PC-3 (cell line): ENCODE measurements at regions of chr10 and their contacts with region 1.

Region 1: DNA sequence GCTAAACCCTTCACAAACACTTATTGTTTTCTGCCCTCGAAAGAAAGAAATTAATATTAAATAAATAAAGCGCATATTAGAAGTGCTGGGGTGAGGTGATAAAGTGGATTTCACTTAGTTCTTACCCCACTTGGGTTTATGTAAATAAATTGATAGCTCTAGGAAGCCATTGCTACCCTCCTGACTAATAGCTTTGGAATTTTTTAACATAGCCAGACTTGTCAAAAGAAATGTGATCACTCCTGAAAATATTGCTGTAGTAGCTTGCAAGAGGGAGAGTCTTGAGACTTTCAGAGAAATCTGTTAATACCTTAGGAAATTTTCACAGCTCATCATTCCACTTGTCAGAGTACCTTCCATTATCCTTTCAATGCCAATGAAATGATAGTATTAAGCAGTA is 7.6 kb downstream of the ARL5B start:
- DNase-seq: peak; percentile 76
- ATAC-seq: peak; percentile 71
- H3K4me3 ChIP-seq: peak overlapping the region; percentile 48
- H3K27ac ChIP-seq: peak overlapping the region; percentile 52
- H3K4me1 ChIP-seq: peaks cover 26% of the 10 kb centered on the region
- H3K27me3 ChIP-seq: no peaks in the 10 kb centered on the region
- CTCF ChIP-seq: no peak

Region 2: GRCh38 chr10:18238870-18239485 is 427.8 kb before region 1 on chr10:
- CTCF ChIA-PET with region 1: no interaction called
- POLR2A ChIA-PET with region 1: no interaction called
- intact Hi-C with region 1: no loop called
- DNase-seq: peak; percentile 46
- ATAC-seq: no peak
- H3K4me3 ChIP-seq: no peak overlapping the region
- H3K27ac ChIP-seq: no peak overlapping the region
- H3K4me1 ChIP-seq: no peaks in the 10 kb centered on the region
- H3K27me3 ChIP-seq: no peaks in the 10 kb centered on the region
- CTCF ChIP-seq: peak; percentile 52

Region 3: DNA sequence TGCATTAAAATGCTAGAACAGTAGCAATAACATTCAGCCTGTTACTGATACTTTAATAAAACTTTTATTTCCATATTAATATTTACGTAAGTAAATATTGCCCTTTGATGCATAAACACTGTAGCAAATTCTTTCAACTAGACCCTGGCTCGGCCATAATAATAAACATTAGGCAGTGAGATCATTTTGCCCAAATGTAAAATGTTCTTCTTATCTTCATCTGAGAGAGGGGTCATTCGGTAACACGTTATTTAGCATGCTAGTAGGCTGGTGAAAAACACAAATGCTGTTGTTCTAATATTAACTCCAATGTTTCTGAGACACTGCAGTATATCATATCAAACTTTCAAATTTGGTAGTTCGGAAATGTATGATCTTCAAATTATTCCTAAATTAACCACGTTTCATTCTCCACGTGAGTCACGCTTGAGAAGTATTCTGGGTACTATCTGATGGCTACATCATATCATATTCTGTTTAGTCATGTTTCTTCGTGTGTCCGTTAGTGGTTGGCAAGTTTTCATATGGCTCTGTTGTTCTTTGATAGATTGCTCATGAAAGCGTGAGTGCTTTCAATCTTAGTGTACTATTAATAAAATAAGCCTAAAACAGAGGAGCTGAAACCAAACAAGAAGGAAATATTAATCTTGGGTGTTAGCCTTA is 161.2 kb before region 1 on chr10:
- CTCF ChIA-PET with region 1: no interaction called
- POLR2A ChIA-PET with region 1: no interaction called
- intact Hi-C with region 1: no loop called
- DNase-seq: peak; percentile 22
- ATAC-seq: no peak; the same call in 1 of the 2 replicates
- H3K4me3 ChIP-seq: no peak overlapping the region
- H3K27ac ChIP-seq: no peak overlapping the region
- H3K4me1 ChIP-seq: 0 out of 2 replicates have a peak, but pooled peaks cover 8% of the 10 kb centered on the region
- H3K27me3 ChIP-seq: no peaks in the 10 kb centered on the region
- CTCF ChIP-seq: no peak

Region 4: GRCh38 chr10:18683427-18683826 is 16.6 kb after region 1 on chr10:
- CTCF ChIA-PET with region 1: no interaction called
- POLR2A ChIA-PET with region 1: no interaction called
- intact Hi-C with region 1: loop called (anchors 2 kb)
- DNase-seq: peak; percentile 63
- ATAC-seq: peak; percentile 44
- H3K4me3 ChIP-seq: no peak overlapping the region
- H3K27ac ChIP-seq: peak overlapping the region; percentile 87
- H3K4me1 ChIP-seq: peaks cover 38% of the 10 kb centered on the region
- H3K27me3 ChIP-seq: no peaks in the 10 kb centered on the region
- CTCF ChIP-seq: no peak